AG04449 (cell line): ENCODE measurements at regions of chr3 and their contacts with region 1.

Region 1: GRCh38 chr3:149969940-149970715 is 567 bp downstream of the PFN2 start:
- DNase-seq: no peak
- H3K4me3 ChIP-seq: peak overlapping the region; percentile 83
- CTCF ChIP-seq: no peak

Region 2: GRCh38 chr3:150146991-150147761 is 177.0 kb after region 1 on chr3:
- CTCF ChIA-PET with region 1: interaction called, 16 read pairs
- POLR2A ChIA-PET with region 1: interaction called, 9 read pairs
- DNase-seq: peak; percentile 69
- H3K4me3 ChIP-seq: peak overlapping the region; percentile 13; the same call in 1 of the 2 replicates
- CTCF ChIP-seq: no peak

Region 3: DNA sequence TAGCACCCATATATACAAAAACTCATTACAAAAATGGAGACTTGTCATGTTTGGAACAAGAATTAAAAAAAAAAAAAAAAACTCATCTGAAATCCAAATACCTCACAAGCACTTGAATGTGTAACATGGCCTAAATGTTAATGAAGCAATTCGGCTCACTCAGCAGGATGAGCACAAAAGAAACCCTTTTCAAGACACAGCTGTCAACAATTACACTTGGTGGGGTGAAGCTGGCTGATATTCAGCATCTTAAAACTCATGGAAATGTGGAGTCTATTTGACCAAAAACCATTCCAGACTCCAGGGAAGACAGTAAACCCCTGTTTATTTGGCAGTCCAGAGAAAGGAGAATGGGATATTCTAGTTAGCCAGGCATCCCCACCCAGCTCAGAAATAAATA is 232.6 kb after region 1 on chr3:
- CTCF ChIA-PET with region 1: interaction called, 12 read pairs
- POLR2A ChIA-PET with region 1: no interaction called
- DNase-seq: no peak
- H3K4me3 ChIP-seq: no peak overlapping the region
- CTCF ChIP-seq: no peak

Region 4: DNA sequence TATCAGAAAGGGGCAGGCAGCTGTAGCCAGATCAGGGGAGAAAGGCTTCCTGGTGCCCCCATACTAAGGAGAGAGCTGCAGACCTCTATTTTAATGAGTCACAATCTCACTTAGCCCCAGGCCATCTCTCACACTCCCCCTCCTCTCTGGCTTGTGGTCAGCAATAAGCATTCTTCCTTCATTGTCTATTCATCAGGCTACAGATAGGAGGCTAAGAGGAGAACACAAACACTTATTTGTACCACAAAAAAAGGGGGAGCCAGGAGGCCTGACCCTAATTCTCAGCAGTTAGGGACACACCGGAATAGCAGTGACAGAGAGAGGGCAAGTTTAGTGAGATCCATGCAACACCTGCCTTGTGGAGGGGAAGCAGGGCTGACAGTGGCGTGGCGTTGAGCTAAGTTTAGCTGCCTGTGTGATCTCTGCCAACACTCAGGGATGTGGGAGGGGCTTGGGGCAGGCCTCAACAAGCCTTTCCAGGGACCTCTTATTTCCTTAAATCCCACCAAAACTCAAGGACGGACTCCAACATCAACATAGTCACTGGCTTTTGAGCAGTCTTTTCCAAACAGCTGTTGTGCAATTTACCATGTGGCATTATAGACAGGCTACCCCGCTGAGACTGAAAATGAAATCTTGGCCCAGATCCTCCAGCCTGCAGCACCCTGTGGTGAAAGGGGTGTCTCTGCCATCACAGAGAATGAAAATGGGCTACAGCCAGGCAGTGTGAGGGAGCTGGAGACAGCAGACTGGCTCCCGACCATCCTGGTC is 246.1 kb after region 1 on chr3:
- CTCF ChIA-PET with region 1: interaction called, 125 read pairs
- POLR2A ChIA-PET with region 1: no interaction called
- DNase-seq: peak; percentile 68
- H3K4me3 ChIP-seq: no peak overlapping the region
- CTCF ChIP-seq: no peak